CD8-positive, alpha-beta T cell (primary cell): ENCODE measurements at regions of chr1 and their contacts with region 1.

Region 1: GRCh38 chr1:207797229-207797961 is 45.5 kb downstream of the CD46 start:
- DNase-seq: peak; percentile 55 to 86 (median 77)
- ATAC-seq: peak; percentile 94
- H3K4me3 ChIP-seq: no peak overlapping the region
- H3K4me3 Mint-ChIP-seq: no peak overlapping the region
- H3K27ac ChIP-seq: no peak overlapping the region
- H3K27ac Mint-ChIP-seq: no peak overlapping the region
- H3K4me1 ChIP-seq: peaks cover 29% of the 10 kb centered on the region
- H3K4me1 Mint-ChIP-seq: peaks cover 45% of the 10 kb centered on the region
- H3K27me3 ChIP-seq: no peaks in the 10 kb centered on the region
- H3K27me3 Mint-ChIP-seq: no peaks in the 10 kb centered on the region
- CTCF ChIP-seq: peak; percentile 96

Region 2: GRCh38 chr1:207654320-207654719 is 143.1 kb before region 1 on chr1:
- CTCF ChIA-PET with region 1: interaction called, 4 read pairs
- POLR2A ChIA-PET with region 1: no interaction called
- intact Hi-C with region 1: loop called (anchors 5 kb)
- DNase-seq: no peak
- ATAC-seq: no peak
- H3K4me3 ChIP-seq: no peak overlapping the region
- H3K4me3 Mint-ChIP-seq: no peak overlapping the region
- H3K27ac ChIP-seq: no peak overlapping the region
- H3K27ac Mint-ChIP-seq: no peak overlapping the region
- H3K4me1 ChIP-seq: no peaks in the 10 kb centered on the region
- H3K4me1 Mint-ChIP-seq: no peaks in the 10 kb centered on the region
- H3K27me3 ChIP-seq: no peaks in the 10 kb centered on the region
- H3K27me3 Mint-ChIP-seq: peaks cover 8% of the 10 kb centered on the region
- CTCF ChIP-seq: no peak

Region 3: DNA sequence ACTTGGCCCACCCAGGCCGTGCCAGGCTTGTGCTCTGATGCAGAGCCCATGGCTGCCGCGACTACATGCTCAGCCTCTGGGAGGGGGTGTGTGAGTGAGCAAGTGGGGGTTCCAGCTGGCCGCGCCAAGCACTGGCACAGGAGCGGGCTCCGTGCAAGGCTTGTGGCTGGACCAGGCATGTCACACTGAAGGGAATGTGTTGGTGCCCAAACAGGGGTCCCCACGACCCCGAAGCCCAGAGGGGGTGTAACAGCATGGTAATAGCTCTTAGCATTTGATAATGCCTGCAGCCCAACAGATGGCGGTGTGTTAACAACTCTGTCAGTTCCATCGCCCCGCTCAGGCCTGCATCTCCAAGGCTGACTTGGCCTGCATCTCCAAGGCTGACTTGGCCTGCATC is 83.9 kb before region 1 on chr1:
- CTCF ChIA-PET with region 1: interaction called, 15 read pairs
- POLR2A ChIA-PET with region 1: interaction called, 3 read pairs
- intact Hi-C with region 1: loop called (anchors 1 to 2 kb)
- DNase-seq: peak in 4 of 9 experiments; percentile 5 to 38 (median 24)
- ATAC-seq: no peak
- H3K4me3 ChIP-seq: no peak overlapping the region
- H3K4me3 Mint-ChIP-seq: no peak overlapping the region
- H3K27ac ChIP-seq: no peak overlapping the region
- H3K27ac Mint-ChIP-seq: no peak overlapping the region
- H3K4me1 ChIP-seq: no peaks in the 10 kb centered on the region
- H3K4me1 Mint-ChIP-seq: peaks cover 3% of the 10 kb centered on the region
- H3K27me3 ChIP-seq: no peaks in the 10 kb centered on the region
- H3K27me3 Mint-ChIP-seq: no peaks in the 10 kb centered on the region
- CTCF ChIP-seq: no peak

Region 4: GRCh38 chr1:207779008-207779407 is 18.4 kb before region 1 on chr1:
- CTCF ChIA-PET with region 1: interaction called, 10 read pairs
- POLR2A ChIA-PET with region 1: no interaction called
- intact Hi-C with region 1: no loop called
- DNase-seq: no peak
- ATAC-seq: no peak
- H3K4me3 ChIP-seq: no peak overlapping the region
- H3K4me3 Mint-ChIP-seq: no peak overlapping the region
- H3K27ac ChIP-seq: no peak overlapping the region
- H3K27ac Mint-ChIP-seq: peak overlapping the region; percentile 23
- H3K4me1 ChIP-seq: no peaks in the 10 kb centered on the region
- H3K4me1 Mint-ChIP-seq: peaks cover 41% of the 10 kb centered on the region
- H3K27me3 ChIP-seq: no peaks in the 10 kb centered on the region
- H3K27me3 Mint-ChIP-seq: no peaks in the 10 kb centered on the region
- CTCF ChIP-seq: no peak

Region 5: DNA sequence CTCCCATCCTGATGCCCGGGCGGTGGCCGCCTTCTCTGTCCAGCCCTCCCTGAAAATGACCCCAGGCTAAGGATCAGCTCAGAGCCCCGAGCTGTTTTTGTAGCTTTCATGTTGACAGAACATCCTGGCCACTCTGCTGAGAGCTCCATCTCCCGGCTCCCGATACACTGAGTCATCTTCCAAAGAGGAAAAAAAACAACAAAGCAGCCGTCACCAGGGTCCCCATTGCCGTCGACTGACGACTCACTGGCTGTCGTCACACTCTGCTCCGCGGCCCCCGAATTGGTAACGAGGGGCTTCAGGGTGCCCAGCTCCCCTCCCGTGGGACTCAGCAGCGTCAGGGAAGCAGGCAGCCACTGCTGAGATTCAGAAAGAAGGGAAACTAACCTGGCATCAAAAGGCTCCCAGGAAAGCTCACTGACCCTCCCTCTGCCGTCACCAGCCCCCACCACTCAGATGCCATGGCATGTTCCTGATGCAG is 21.6 kb after region 1 on chr1:
- CTCF ChIA-PET with region 1: interaction called, 24 read pairs
- POLR2A ChIA-PET with region 1: interaction called, 9 read pairs
- intact Hi-C with region 1: loop called in 1 of 2 experiments (anchors 2 kb)
- DNase-seq: no peak
- ATAC-seq: no peak
- H3K4me3 ChIP-seq: no peak overlapping the region
- H3K4me3 Mint-ChIP-seq: no peak overlapping the region
- H3K27ac ChIP-seq: no peak overlapping the region
- H3K27ac Mint-ChIP-seq: no peak overlapping the region
- H3K4me1 ChIP-seq: peaks cover 50% of the 10 kb centered on the region
- H3K4me1 Mint-ChIP-seq: peaks cover 75% of the 10 kb centered on the region
- H3K27me3 ChIP-seq: no peaks in the 10 kb centered on the region
- H3K27me3 Mint-ChIP-seq: no peaks in the 10 kb centered on the region
- CTCF ChIP-seq: no peak

Region 6: GRCh38 chr1:207868774-207869721 is 71.7 kb after region 1 on chr1:
- CTCF ChIA-PET with region 1: interaction called, 32 read pairs
- POLR2A ChIA-PET with region 1: interaction called, 6 read pairs
- intact Hi-C with region 1: loop called in 1 of 2 experiments (anchors 2 kb)
- DNase-seq: peak; percentile 56 to 90 (median 68)
- ATAC-seq: peak; percentile 68
- H3K4me3 ChIP-seq: peak overlapping the region; percentile 66 to 87
- H3K4me3 Mint-ChIP-seq: peak overlapping the region; percentile 94
- H3K27ac ChIP-seq: peak overlapping the region; percentile 72 to 84
- H3K27ac Mint-ChIP-seq: peak overlapping the region; percentile 96
- H3K4me1 ChIP-seq: peaks cover 80% of the 10 kb centered on the region
- H3K4me1 Mint-ChIP-seq: peaks cover 90% of the 10 kb centered on the region
- H3K27me3 ChIP-seq: no peaks in the 10 kb centered on the region
- H3K27me3 Mint-ChIP-seq: no peaks in the 10 kb centered on the region
- CTCF ChIP-seq: peak; percentile 83

Region 7: GRCh38 chr1:207963427-207964194 is 166.2 kb after region 1 on chr1:
- CTCF ChIA-PET with region 1: interaction called, 24 read pairs
- POLR2A ChIA-PET with region 1: no interaction called
- intact Hi-C with region 1: loop called (anchors 1 kb)
- DNase-seq: peak; percentile 67 to 93 (median 82)
- ATAC-seq: peak; percentile 91
- H3K4me3 ChIP-seq: peak overlapping the region; percentile 71 to 92
- H3K4me3 Mint-ChIP-seq: peak overlapping the region; percentile 85
- H3K27ac ChIP-seq: peak overlapping the region; percentile 28 to 73
- H3K27ac Mint-ChIP-seq: peak overlapping the region; percentile 55
- H3K4me1 ChIP-seq: peaks cover 8% of the 10 kb centered on the region
- H3K4me1 Mint-ChIP-seq: peaks cover 12% of the 10 kb centered on the region
- H3K27me3 ChIP-seq: peaks cover 4 to 12% of the 10 kb centered on the region in 2 experiments
- H3K27me3 Mint-ChIP-seq: peaks cover 17% of the 10 kb centered on the region
- CTCF ChIP-seq: peak; percentile 99

Region 8: GRCh38 chr1:208093754-208094719 is 296.6 kb after region 1 on chr1:
- CTCF ChIA-PET with region 1: no interaction called
- POLR2A ChIA-PET with region 1: no interaction called
- intact Hi-C with region 1: no loop called
- DNase-seq: peak; percentile 21 to 68 (median 58)
- ATAC-seq: peak; percentile 23
- H3K4me3 ChIP-seq: no peak overlapping the region
- H3K4me3 Mint-ChIP-seq: no peak overlapping the region
- H3K27ac ChIP-seq: no peak overlapping the region
- H3K27ac Mint-ChIP-seq: no peak overlapping the region
- H3K4me1 ChIP-seq: no peaks in the 10 kb centered on the region
- H3K4me1 Mint-ChIP-seq: no peaks in the 10 kb centered on the region
- H3K27me3 ChIP-seq: no peaks in the 10 kb centered on the region
- H3K27me3 Mint-ChIP-seq: no peaks in the 10 kb centered on the region
- CTCF ChIP-seq: peak; percentile 64